ENCODE measurements at regions of chr20 and their contacts with region 1.

Region 1: DNA sequence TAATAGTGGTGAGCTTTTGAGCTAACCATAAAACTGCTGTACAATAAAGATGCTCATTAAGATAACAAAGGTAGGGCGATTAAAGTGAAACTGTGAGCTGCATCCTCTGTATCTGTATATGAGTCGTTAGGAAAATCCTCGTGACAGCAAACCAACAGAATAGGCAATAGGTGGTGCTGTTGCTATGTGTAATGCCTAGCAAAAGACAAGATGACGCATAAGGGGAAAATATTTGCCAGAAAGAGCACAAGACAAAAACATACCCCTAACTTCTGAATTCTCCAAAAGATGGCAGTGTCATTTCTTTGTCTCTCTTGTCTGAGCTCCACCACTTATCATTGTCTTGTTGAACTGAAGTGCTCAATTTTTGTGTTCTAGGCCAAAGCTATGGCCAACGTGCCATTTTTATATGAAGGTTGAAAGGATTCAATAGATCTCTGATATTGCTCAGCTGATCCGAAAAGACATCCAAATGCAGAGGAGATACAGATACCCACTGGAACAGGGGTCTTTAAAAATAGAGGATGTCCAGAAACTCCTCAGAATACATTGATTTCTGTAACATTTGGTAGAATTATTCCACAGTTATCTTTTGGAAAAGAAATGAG is 56.3 kb upstream of the ANKEF1 start:
- DNase-seq: peak; percentile 66
- H3K4me3 ChIP-seq: peak overlapping the region; percentile 6 to 16; a peak in 2 of 4 replicates
- H3K27ac ChIP-seq: no peak overlapping the region; a peak in 1 of 4 replicates
- H3K4me1 ChIP-seq: no peaks in the 10 kb centered on the region; a peak in 1 of 4 replicates
- H3K27me3 ChIP-seq: no peaks in the 10 kb centered on the region
- CTCF ChIP-seq: peak; percentile 94
- EP300 ChIP-seq: no peak
- RAD21 ChIP-seq: peak; percentile 99

Region 2: DNA sequence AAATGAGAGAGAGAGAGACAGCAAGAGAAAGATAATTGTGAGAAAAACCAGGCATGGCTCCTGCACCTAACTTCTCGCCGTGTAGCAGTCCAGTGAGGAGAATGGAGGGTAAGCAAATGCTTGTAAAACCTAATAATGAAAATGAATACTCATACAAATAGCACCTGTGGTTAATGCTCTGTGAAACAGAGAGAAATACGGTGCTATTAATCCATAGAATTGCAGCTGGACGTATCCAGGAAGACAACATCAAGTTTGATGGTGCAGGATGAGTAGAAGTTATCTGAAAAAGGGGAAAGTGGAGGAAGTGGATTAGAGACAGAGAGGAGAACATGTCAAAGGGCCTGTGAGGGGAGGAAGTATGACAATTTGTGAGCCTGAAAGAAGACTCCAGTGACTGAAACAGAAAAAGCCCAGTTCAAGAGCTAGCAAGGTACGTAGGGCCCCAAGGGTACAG is 50.2 kb before region 1 on chr20:
- CTCF ChIA-PET with region 1: no interaction called
- POLR2A ChIA-PET with region 1: no interaction called
- DNase-seq: no peak
- H3K4me3 ChIP-seq: no peak overlapping the region
- H3K27ac ChIP-seq: no peak overlapping the region
- H3K4me1 ChIP-seq: peaks cover 0 to 3% of the 10 kb centered on the region in 2 experiments; a peak in 2 of 4 replicates
- H3K27me3 ChIP-seq: no peaks in the 10 kb centered on the region
- CTCF ChIP-seq: no peak
- EP300 ChIP-seq: no peak
- RAD21 ChIP-seq: no peak

Region 3: GRCh38 chr20:9939231-9939630 is 39.3 kb before region 1 on chr20:
- CTCF ChIA-PET with region 1: no interaction called
- POLR2A ChIA-PET with region 1: no interaction called
- DNase-seq: no peak
- H3K4me3 ChIP-seq: no peak overlapping the region
- H3K27ac ChIP-seq: no peak overlapping the region
- H3K4me1 ChIP-seq: no peaks in the 10 kb centered on the region
- H3K27me3 ChIP-seq: no peaks in the 10 kb centered on the region
- CTCF ChIP-seq: no peak
- EP300 ChIP-seq: no peak
- RAD21 ChIP-seq: no peak

Region 4: DNA sequence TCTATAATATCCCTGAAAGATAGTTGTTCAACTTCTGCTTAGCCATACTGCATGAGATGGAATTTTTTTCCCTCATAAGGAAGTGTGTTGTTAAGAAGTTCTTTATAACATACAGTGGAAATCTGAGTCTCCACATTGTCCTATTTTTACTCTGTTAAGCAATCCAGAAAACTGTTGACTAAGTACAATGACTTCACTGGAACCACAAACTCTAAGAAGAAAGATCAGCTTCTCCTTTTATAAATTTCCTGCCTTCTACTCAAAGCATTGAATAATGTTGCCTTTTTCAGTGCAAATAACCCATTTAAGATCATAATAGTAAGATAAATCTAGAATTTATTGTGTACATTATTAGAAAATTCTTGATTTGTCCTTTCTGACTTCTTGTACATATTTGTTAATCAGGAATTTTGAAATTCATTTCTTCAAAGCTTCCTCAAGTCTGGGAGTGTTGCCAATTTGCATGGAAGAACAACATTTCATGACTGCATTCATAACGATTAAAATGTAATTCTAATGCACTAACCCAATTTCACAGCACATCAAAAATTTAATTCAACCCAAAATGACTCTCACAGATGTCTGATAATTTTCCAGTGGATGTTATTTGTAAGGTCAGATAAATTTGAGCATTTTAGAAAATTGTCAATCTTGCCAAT is 10.7 kb after region 1 on chr20:
- CTCF ChIA-PET with region 1: interaction called, 22 read pairs
- POLR2A ChIA-PET with region 1: no interaction called
- DNase-seq: no peak
- H3K4me3 ChIP-seq: no peak overlapping the region
- H3K27ac ChIP-seq: peak overlapping the region; percentile 16 to 31; a peak in 2 of 4 replicates
- H3K4me1 ChIP-seq: no peaks in the 10 kb centered on the region; a peak in 1 of 4 replicates
- H3K27me3 ChIP-seq: no peaks in the 10 kb centered on the region
- CTCF ChIP-seq: no peak
- EP300 ChIP-seq: no peak
- RAD21 ChIP-seq: no peak

Region 5: GRCh38 chr20:10077081-10077471 is 98.6 kb after region 1 on chr20:
- CTCF ChIA-PET with region 1: interaction called, 18 read pairs
- POLR2A ChIA-PET with region 1: no interaction called
- DNase-seq: no peak
- H3K4me3 ChIP-seq: no peak overlapping the region
- H3K27ac ChIP-seq: no peak overlapping the region
- H3K4me1 ChIP-seq: peaks cover 0 to 21% of the 10 kb centered on the region in 2 experiments; a peak in 1 of 4 replicates
- H3K27me3 ChIP-seq: no peaks in the 10 kb centered on the region
- CTCF ChIP-seq: peak; percentile 56
- EP300 ChIP-seq: no peak
- RAD21 ChIP-seq: no peak

Region 6: GRCh38 chr20:10225439-10226060 is 247.0 kb after region 1 on chr20:
- CTCF ChIA-PET with region 1: interaction called, 20 read pairs
- POLR2A ChIA-PET with region 1: no interaction called
- DNase-seq: peak; percentile 34
- H3K4me3 ChIP-seq: no peak overlapping the region; a peak in 1 of 4 replicates
- H3K27ac ChIP-seq: no peak overlapping the region
- H3K4me1 ChIP-seq: peaks cover 0 to 7% of the 10 kb centered on the region in 2 experiments; a peak in 2 of 4 replicates
- H3K27me3 ChIP-seq: no peaks in the 10 kb centered on the region
- CTCF ChIP-seq: peak; percentile 53
- EP300 ChIP-seq: no peak
- RAD21 ChIP-seq: peak; percentile 55

Region 7: DNA sequence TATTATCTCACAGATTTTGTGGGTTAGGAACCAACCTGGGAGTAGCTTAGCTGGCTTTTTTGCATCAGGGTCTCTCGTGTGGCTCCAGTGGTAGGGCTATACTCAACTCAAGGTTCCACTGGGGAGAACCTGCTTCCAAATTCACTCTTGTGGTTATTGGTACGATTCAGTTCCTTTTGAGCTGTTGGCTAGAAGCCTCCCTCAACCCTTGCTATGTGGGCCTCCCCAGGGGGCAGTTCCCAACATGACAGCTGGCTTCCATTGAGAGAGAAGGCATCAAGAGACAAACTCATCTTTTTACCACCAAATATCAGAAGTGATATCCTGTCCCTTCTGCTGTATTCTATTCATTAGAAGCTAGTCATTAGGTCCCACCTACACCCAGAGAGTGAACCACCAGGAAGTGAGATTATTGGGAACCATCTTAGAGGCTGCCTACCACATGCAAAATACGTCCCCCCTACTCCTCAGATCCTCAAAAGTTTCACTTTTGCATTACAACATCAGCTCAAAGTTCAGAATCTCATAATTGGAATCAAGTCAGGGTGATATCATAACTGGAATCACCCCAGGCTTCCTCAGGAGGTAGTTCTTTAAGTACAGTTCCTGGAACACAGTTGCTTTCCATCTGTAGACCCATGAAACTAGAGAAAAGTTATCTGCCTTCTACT is 424.6 kb after region 1 on chr20:
- CTCF ChIA-PET with region 1: interaction called, 16 read pairs
- POLR2A ChIA-PET with region 1: no interaction called
- DNase-seq: no peak
- H3K4me3 ChIP-seq: no peak overlapping the region
- H3K27ac ChIP-seq: no peak overlapping the region
- H3K4me1 ChIP-seq: no peaks in the 10 kb centered on the region
- H3K27me3 ChIP-seq: no peaks in the 10 kb centered on the region
- CTCF ChIP-seq: no peak
- EP300 ChIP-seq: no peak
- RAD21 ChIP-seq: no peak

Region 8: GRCh38 chr20:10427060-10427692 is 448.7 kb after region 1 on chr20:
- CTCF ChIA-PET with region 1: interaction called, 92 read pairs
- POLR2A ChIA-PET with region 1: interaction called, 3 read pairs
- DNase-seq: peak; percentile 51
- H3K4me3 ChIP-seq: no peak overlapping the region; a peak in 1 of 4 replicates
- H3K27ac ChIP-seq: no peak overlapping the region
- H3K4me1 ChIP-seq: peaks cover 5 to 8% of the 10 kb centered on the region in 2 experiments; a peak in 3 of 4 replicates
- H3K27me3 ChIP-seq: no peaks in the 10 kb centered on the region
- CTCF ChIP-seq: peak; percentile 98
- EP300 ChIP-seq: no peak
- RAD21 ChIP-seq: peak; percentile 80

Region 9: GRCh38 chr20:11544029-11544678 is 1565.7 kb after region 1 on chr20:
- CTCF ChIA-PET with region 1: interaction called, 19 read pairs
- POLR2A ChIA-PET with region 1: no interaction called
- DNase-seq: peak; percentile 43
- H3K4me3 ChIP-seq: no peak overlapping the region
- H3K27ac ChIP-seq: 0 out of 4 replicates have a peak overlapping the region, but pooled peaks of 1 of the 2 experiments have one; percentile 5
- H3K4me1 ChIP-seq: no peaks in the 10 kb centered on the region
- H3K27me3 ChIP-seq: no peaks in the 10 kb centered on the region
- CTCF ChIP-seq: peak; percentile 75
- EP300 ChIP-seq: no peak
- RAD21 ChIP-seq: peak; percentile 83